Activated CD4-positive, alpha-beta memory T cell treated with anti-CD3 and anti-CD28 coated beads, Interleukin-2, amount 10 ng/mL, durations not matched to agents 7 days and 5 days (primary cell): ENCODE measurements at regions of chr19 and their contacts with region 1.

Region 1: DNA sequence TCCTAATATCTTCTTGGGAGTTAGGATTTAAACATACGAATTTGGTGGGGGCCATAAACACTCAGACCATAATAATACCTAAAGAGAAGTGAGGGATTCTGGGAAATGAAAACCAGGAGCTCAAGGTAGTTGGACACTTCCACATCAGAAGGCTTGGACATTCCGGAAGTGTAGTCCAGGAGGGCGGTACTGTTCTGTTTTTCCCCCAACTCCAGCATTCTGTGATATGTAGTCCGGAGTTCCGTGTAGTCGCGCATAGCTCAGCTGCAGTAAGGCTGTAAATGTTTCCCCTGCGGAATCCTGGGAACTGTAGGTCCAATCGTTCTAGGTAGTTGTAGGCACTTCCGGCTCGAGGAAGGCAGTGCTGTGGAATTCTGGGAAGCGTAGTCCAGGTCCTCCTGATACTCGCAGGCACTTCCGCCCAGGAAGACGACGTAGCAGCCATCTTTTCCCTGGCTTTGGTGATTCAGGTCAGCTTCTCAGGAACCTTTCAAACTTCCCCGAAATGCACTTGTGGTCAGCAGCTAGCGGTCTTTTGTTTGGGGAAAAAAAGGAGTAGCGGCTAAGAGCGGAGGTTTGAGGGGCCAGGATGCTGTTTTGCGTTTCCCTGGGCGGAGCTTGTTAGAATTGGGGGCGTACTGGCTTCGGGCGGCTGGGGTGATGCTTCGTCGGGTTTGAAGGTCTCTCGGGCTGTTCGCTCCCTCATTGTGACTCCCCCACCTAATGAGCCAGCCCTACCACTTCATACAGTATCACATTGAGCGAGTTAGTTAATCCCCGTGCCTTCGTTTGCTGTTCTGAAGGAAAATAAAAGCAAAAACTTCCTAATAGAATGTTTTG is at the start of gene ZNF226:
- DNase-seq: peak; percentile 82
- H3K4me3 Mint-ChIP-seq: peak within 1 kb of the TSS; percentile 94
- H3K27ac Mint-ChIP-seq: peak within 1 kb of the TSS; percentile 87
- H3K4me1 Mint-ChIP-seq: peaks cover 34% of the 10 kb centered on the region
- H3K27me3 Mint-ChIP-seq: no peaks in the 10 kb centered on the region
- total RNA-seq, gene ZNF226: 17.4 to 18.0 TPM

Region 2: GRCh38 chr19:44207126-44207803 is 42.4 kb after region 1 on chr19:
- CTCF ChIA-PET with region 1: interaction called, 3 read pairs
- POLR2A ChIA-PET with region 1: interaction called, 20 read pairs
- DNase-seq: peak; percentile 77
- H3K4me3 Mint-ChIP-seq: peak overlapping the region; percentile 85
- H3K27ac Mint-ChIP-seq: peak overlapping the region; percentile 73
- H3K4me1 Mint-ChIP-seq: peaks cover 11% of the 10 kb centered on the region
- H3K27me3 Mint-ChIP-seq: no peaks in the 10 kb centered on the region